ENCODE measurements at regions of chr11 and their contacts with region 1.

Region 1: DNA sequence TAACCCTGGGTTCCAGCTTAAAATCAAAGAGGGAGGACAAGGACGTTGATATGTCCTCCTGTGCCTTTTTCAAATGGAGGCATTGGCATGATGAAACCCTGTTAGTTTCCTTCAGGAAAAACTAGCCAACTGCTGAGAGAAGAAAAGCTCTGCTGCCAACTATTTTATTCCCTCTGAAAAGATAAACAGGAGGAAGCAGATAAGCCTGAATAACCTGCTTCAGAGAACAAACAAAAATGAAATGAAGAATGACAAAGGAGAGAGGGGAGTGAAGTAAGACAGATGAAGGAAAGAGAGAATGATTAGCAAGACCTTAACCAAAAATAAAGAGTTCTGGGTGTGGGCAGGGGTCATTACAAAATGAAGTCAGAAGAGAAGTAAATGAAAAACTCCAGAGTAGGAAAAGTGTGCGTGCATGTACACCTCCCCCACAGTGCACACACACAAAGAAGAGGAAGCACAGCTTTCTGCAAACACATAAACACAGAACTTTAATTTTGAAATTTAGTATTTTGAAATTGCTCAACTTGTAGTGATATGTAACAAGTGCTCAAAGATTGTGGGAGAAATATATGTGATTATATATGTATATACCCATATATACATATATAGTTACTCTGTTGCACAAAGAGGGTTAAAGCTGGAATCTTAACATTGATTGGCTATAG is 332.2 kb downstream of the LUZP2 start:
- DNase-seq: no peak
- H3K4me3 ChIP-seq: no peak overlapping the region
- H3K27ac ChIP-seq: no peak overlapping the region
- H3K4me1 ChIP-seq: peaks cover 7% of the 10 kb centered on the region
- H3K27me3 ChIP-seq: no peaks in the 10 kb centered on the region
- CTCF ChIP-seq: no peak

Region 2: GRCh38 chr11:24642648-24643047 is 186.4 kb before region 1 on chr11:
- CTCF ChIA-PET with region 1: no interaction called
- POLR2A ChIA-PET with region 1: no interaction called
- intact Hi-C with region 1: no loop called
- DNase-seq: no peak
- H3K4me3 ChIP-seq: no peak overlapping the region
- H3K27ac ChIP-seq: no peak overlapping the region
- H3K4me1 ChIP-seq: peaks cover 5% of the 10 kb centered on the region
- H3K27me3 ChIP-seq: no peaks in the 10 kb centered on the region
- CTCF ChIP-seq: no peak

Region 3: DNA sequence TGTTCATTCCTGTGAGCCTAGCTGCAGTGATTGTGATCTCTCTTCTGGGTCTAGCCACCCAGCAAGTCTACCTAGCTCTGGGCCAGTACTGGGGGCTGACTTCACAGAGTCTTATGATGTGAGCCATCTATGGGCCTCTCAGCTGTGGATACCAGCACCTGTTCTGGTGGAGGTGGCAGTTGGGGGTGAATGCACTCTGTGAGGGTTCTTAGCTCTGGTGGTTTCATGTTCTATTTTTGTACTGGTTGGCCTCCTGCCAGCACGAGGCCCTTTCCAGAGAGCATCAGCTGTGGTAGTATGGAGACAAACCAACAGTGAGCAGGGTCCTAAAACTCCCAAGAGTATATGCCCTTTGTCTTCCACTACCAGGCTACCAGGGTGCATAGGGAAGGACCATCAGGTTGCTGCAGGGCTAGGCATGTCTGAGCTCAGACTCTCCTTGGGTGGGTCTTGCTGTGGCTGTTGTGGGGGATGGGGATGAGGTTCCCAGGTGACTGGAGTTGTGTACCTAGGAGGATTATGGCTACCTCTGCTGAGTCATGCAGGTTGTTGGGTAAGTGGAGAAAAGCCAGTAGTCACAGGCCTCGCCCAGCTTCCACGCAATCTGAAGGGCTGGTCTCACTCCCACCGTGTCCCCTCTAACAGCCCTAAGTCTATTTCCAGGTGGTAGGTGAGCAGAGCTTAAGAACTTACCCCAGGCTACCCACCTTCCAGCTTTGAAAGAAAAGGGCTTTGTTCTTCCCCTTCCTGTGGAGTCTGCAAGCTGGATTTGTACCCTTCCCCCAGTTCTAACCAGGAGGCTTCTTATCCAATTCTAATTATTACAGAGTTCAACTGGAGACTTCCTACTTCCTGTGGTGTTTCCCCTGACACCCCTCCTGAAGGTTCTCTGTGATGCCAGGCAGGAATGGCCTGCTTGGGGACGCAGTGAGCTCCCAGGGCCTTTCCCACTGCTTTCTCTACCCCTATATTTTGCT is 81.5 kb before region 1 on chr11:
- CTCF ChIA-PET with region 1: no interaction called
- POLR2A ChIA-PET with region 1: interaction called, 11 read pairs
- intact Hi-C with region 1: no loop called
- DNase-seq: no peak
- H3K4me3 ChIP-seq: no peak overlapping the region
- H3K27ac ChIP-seq: no peak overlapping the region
- H3K4me1 ChIP-seq: 0 out of 2 replicates have a peak, but pooled peaks cover 10% of the 10 kb centered on the region
- H3K27me3 ChIP-seq: no peaks in the 10 kb centered on the region
- CTCF ChIP-seq: no peak

Region 4: DNA sequence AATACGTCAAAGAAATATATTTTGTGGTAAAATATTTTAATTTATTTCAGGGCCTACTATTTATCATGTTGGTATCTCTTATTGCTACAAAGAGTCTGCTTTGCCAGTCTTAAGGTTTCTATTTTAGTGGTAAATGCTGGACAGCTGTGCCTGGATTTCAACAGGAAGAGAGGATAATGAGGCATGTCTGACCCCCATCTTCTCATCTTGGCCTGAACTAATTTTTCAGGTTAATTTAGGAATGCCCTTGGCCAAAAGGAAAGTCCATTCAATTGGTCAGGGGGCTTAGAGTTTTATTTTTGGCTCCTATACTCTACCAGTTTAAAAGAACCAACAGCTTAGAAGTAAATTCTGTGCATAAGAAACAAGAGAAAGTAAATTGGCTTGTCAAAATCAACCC is 96.0 kb after region 1 on chr11:
- CTCF ChIA-PET with region 1: interaction called, 10 read pairs
- POLR2A ChIA-PET with region 1: no interaction called
- intact Hi-C with region 1: no loop called
- DNase-seq: no peak
- H3K4me3 ChIP-seq: no peak overlapping the region
- H3K27ac ChIP-seq: no peak overlapping the region
- H3K4me1 ChIP-seq: no peaks in the 10 kb centered on the region
- H3K27me3 ChIP-seq: no peaks in the 10 kb centered on the region
- CTCF ChIP-seq: no peak

Measured in PC-9 (cell line).